Heart left ventricle (tissue), 16 donors: ENCODE measurements at regions of chr6 and their contacts with region 1.

Region 1: DNA sequence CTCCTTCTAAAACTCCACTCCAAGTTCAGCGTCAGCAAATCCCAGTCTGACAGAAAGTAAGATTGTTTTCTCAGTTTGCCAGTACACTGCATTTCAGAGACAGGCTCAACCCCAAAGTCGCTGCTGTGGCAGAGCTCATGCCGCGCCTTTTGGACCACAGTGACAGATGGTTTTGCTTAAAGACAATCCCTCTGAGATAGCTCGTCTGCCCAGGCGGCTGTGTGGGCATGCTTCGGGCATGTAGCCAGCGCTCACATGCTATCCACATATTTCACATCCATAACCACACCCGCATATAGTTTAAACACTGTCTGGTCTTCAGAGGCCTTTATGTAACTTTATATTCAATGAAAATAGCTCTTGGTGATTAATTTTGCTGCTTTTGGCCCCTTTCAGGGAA is 14.7 kb upstream of the PXDC1 start:
- DNase-seq: no peak
- ATAC-seq: no peak
- H3K4me3 ChIP-seq: no peak overlapping the region
- H3K27ac ChIP-seq: no peak overlapping the region
- H3K4me1 ChIP-seq: peaks cover 0 to 4% (median 0%) of the 10 kb centered on the region in 12 donors
- H3K27me3 ChIP-seq: no peaks in the 10 kb centered on the region
- CTCF ChIP-seq: no peak
- POLR2A ChIP-seq: no peak

Region 2: DNA sequence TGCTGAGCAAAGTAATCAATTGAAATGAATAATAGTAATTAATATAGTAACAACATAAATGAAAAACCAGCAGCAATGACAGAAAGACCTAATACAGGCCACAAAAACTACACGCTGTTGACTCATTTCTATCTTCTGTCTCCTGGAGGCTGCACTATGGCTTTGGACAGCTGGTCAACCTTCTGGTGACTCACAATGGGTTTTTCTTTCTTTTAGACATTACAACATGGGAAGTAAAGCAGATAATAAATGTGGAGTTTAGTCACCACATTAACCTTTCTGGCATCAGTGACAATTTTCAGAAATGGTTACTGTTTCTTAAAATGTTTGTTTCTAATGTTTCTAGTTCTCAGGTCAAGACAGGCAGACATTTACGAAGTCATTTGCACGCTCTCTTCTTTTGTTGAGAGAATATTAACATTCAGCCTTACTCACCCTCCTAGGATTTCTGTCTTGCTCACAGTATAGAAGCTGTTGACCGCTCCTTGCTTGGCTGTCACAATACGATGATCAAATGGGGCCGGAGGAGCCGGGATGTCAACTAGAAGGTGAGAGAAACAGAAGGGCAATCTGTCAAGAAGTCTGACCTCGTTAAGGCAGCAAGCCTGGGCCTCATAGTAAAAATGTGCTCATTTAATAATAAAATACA is 1077.7 kb before region 1 on chr6:
- intact Hi-C with region 1: no loop called
- DNase-seq: peak in 1 of 5 donors; percentile 36
- ATAC-seq: peak in 3 of 4 donors; percentile 59 to 96 (median 88)
- H3K4me3 ChIP-seq: no peak overlapping the region
- H3K27ac ChIP-seq: peak overlapping the region in 1 of 12 donors; percentile 6
- H3K4me1 ChIP-seq: no peaks in the 10 kb centered on the region
- H3K27me3 ChIP-seq: no peaks in the 10 kb centered on the region
- CTCF ChIP-seq: no peak
- POLR2A ChIP-seq: no peak

Region 3: GRCh38 chr6:3813150-3813780 is 47.1 kb after region 1 on chr6:
- intact Hi-C with region 1: loop called in 1 of 10 experiments (anchors 5 kb)
- DNase-seq: peak; percentile 77 to 86 (median 80)
- ATAC-seq: peak; percentile 73 to 98 (median 92)
- H3K4me3 ChIP-seq: no peak overlapping the region
- H3K27ac ChIP-seq: peak overlapping the region in 6 of 12 donors; percentile 1 to 64 (median 28)
- H3K4me1 ChIP-seq: peaks cover 0 to 29% (median 25%) of the 10 kb centered on the region in 12 donors
- H3K27me3 ChIP-seq: no peaks in the 10 kb centered on the region
- CTCF ChIP-seq: peak in 1 of 12 donors; percentile 28
- POLR2A ChIP-seq: no peak